Upper lobe of right lung (tissue), 1 donor: ENCODE measurements at regions of chr14 and their contacts with region 1.

Region 1: DNA sequence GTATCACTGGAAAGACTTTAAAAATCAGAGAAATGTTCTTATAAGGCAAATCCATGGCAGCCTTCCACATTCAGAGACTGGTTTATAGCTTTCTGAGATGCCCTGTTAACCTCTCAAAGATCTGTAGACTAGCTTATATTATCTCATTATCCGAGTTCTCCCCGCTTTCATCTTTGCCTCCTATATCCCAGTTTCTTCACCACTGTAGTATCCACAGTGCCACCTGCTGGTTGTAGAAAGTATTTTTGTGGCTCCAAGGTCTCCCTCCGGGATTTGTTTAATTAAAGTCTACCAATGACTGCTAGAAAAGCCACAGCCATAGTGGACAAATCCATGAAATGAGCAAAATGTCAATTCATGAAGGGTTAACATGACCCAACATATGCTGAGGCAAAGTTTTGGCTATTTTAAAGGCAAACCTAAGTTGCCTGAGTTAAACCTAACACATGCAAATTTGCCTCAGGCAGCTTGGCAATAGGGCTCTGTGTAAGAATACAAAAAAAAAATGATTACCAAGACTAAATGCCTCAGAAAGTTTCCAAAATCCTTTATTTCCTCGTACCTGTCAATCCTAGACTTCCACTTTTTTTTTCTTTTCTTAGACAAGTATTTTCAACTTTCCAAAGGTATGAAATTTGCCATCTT is 218.8 kb upstream of the BMP4 start:
- DNase-seq: no peak
- ATAC-seq: peak; percentile 87
- H3K4me3 ChIP-seq: no peak overlapping the region
- H3K27ac ChIP-seq: no peak overlapping the region
- H3K4me1 ChIP-seq: peaks cover 3% of the 10 kb centered on the region
- H3K27me3 ChIP-seq: no peaks in the 10 kb centered on the region
- CTCF ChIP-seq: peak; percentile 92

Region 2: GRCh38 chr14:53539489-53540126 is 635.8 kb before region 1 on chr14:
- intact Hi-C with region 1: loop called (anchors 10 kb)
- DNase-seq: peak; percentile 75
- ATAC-seq: peak; percentile 93
- H3K4me3 ChIP-seq: no peak overlapping the region
- H3K27ac ChIP-seq: no peak overlapping the region
- H3K4me1 ChIP-seq: no peaks in the 10 kb centered on the region
- H3K27me3 ChIP-seq: no peaks in the 10 kb centered on the region
- CTCF ChIP-seq: peak; percentile 82

Region 3: DNA sequence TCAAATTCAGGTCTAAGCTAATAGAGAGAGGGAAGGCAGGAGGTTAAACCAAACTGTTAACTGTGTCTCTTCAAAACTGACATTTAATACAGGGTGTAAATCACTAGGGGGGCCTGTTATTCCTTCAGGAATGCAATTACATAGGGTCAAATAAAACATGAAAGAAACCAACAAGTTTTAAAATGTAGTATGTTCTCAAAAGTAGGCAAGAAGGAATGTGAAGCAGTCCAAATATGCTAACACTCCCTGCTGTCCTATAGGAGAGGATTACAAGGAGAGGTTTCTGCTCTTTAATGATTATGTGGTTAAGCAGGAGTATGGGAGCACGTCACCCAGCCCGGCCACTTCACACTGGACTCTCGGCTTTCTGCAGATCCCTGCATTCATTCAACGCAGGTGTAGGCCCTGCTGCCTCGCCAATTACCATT is 176.3 kb before region 1 on chr14:
- intact Hi-C with region 1: no loop called
- DNase-seq: peak; percentile 72
- ATAC-seq: peak; percentile 93
- H3K4me3 ChIP-seq: no peak overlapping the region
- H3K27ac ChIP-seq: no peak overlapping the region
- H3K4me1 ChIP-seq: no peaks in the 10 kb centered on the region
- H3K27me3 ChIP-seq: no peaks in the 10 kb centered on the region
- CTCF ChIP-seq: no peak